Heart right ventricle (tissue), 16 donors: ENCODE measurements at regions of chr4 and their contacts with region 1.

Region 1: DNA sequence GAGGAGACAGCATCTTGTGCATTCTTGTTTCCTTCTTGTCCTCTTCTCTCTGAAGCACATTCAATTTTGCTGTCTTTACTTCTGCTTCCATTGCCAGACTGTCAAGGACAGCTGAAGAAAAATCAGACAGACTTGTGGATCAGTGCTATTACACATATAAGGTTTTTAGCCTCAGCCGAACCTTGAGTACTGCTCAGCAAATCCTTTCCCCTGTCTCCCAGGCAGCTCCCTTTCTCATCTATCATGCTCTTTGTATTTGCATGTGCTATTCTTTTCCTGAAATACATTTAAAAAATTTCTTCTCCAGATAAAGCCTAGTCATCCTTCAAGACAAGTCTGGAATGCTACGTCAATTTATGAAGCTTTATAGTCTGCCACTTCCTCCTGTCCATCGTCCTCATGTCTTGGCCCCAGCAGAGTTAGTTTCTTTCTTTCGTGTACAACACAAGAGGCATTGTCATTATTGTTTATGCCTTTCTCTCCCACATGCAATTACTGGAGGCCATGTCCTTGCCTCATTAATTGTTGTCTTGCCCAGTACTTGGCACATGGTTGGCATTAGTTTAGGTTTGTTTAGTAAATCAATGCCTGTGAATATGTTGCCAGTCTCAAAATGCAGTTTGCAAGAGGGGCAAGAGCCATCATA is 45.1 kb downstream of the ADGRL3 start:
- DNase-seq: no peak
- ATAC-seq: no peak
- H3K4me3 ChIP-seq: no peak overlapping the region
- H3K27ac ChIP-seq: no peak overlapping the region
- H3K4me1 ChIP-seq: no peaks in the 10 kb centered on the region
- H3K27me3 ChIP-seq: no peaks in the 10 kb centered on the region
- CTCF ChIP-seq: no peak

Region 2: DNA sequence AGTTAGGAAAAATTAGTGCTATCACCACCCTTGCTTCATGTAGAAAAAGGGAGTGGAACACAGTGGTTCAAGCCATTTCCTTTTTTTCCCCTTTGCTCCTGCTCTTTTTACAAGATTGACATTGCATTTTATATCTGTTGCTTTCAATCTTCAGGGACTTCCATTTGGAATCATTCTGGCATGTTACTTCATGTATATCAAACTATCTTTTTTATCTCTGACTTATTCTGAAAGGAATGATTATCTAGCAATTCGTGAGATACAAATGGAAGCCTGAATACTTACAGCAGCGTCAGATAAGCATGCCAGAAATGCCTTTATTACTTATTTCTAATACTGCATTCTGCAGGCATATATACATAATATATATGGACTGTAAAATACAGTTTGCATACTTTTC is 24.6 kb before region 1 on chr4:
- intact Hi-C with region 1: loop called in 1 of 10 experiments (anchors 2 kb)
- DNase-seq: no peak
- ATAC-seq: no peak
- H3K4me3 ChIP-seq: no peak overlapping the region
- H3K27ac ChIP-seq: no peak overlapping the region
- H3K4me1 ChIP-seq: no peaks in the 10 kb centered on the region
- H3K27me3 ChIP-seq: no peaks in the 10 kb centered on the region
- CTCF ChIP-seq: no peak

Region 3: DNA sequence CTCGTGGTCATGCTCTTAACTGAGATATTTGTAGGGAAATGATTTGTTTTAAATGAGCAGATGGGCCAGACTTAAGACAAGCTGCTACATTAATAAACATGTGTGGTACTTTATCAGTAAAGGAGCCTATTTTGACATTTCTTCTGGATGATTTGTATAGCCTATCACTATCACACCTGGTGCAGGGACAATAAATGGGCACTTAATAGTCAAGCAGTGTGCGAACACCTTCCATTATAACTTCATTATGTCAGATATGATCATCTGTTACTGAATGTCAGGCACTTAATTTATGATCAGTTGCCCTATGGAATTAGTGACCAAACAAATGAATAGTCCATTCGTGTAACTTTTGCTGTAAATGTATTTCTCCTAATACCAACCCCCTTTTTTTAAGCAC is 583.8 kb after region 1 on chr4:
- intact Hi-C with region 1: no loop called
- DNase-seq: no peak
- ATAC-seq: no peak
- H3K4me3 ChIP-seq: no peak overlapping the region
- H3K27ac ChIP-seq: no peak overlapping the region
- H3K4me1 ChIP-seq: no peaks in the 10 kb centered on the region
- H3K27me3 ChIP-seq: no peaks in the 10 kb centered on the region
- CTCF ChIP-seq: no peak